CD8-positive, alpha-beta T cell (primary cell): ENCODE measurements at regions of chr2 and their contacts with region 1.

Region 1: DNA sequence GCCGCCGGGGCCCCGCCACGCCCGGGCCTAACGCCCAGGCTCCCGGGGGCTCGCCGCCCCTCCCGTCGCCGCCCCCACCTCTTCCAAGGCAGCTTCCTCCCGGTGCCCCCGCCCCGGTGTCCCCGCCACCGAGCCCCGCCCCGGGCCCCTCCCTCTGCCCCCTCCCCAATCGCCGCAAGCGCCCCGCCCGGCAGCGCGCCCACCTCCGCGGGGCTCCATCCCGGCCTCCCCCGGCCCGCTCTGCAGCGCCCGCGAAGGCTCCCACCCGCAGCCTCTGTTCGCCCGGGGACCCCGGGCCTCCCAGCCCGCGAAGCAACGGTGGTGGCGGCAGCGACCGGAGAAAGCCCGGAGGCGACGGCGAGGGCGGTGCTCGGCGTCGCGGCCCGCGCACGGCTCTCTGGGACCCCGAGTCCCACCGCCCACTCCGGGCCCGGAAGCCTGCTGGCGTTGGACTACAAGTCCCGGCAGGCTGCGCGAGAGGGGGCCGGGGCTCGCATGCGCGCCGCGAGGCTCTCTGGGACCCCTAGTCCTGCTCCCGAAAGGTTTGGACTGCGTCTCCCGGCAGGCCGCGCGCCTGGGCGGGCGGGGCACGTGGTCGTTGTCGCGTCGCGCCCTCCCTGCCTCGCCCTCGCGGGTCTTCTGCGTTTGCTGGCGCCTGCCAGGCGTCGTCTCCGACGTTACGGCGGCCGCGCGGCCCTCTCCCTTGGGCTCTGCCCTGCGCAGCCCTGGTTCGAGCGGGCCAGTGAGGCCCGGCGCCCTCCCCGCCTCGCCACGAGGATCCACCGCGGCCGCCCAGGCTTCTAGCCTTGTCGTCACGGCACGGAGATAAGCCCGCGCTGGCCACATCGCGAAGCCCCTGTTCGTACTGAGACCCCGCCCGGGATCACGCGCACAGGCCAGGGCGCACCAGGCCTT is at the start of gene STK25:
- DNase-seq: peak; percentile 94 to 98 (median 97)
- ATAC-seq: peak; percentile 93
- H3K4me3 ChIP-seq: peak within 1 kb of the TSS; percentile 71 to 72
- H3K4me3 Mint-ChIP-seq: peak within 1 kb of the TSS; percentile 81
- H3K27ac ChIP-seq: peak within 1 kb of the TSS; percentile 78 to 81
- H3K27ac Mint-ChIP-seq: peak within 1 kb of the TSS; percentile 85
- H3K4me1 ChIP-seq: peaks cover 21% of the 10 kb centered on the region
- H3K4me1 Mint-ChIP-seq: peaks cover 24% of the 10 kb centered on the region
- H3K27me3 ChIP-seq: no peaks in the 10 kb centered on the region
- H3K27me3 Mint-ChIP-seq: no peaks in the 10 kb centered on the region
- CTCF ChIP-seq: no peak
- total RNA-seq, gene STK25: 58.7 to 66.4 TPM

Region 2: GRCh38 chr2:240566203-240567136 is 942.0 kb before region 1 on chr2:
- CTCF ChIA-PET with region 1: no interaction called
- POLR2A ChIA-PET with region 1: no interaction called
- intact Hi-C with region 1: loop called in 1 of 2 experiments (anchors 5 kb)
- DNase-seq: peak; percentile 89 to 97 (median 96)
- ATAC-seq: peak; percentile 62
- H3K4me3 ChIP-seq: peak overlapping the region; percentile 61 to 71
- H3K4me3 Mint-ChIP-seq: peak overlapping the region; percentile 94
- H3K27ac ChIP-seq: peak overlapping the region; percentile 79 to 93
- H3K27ac Mint-ChIP-seq: peak overlapping the region; percentile 99
- H3K4me1 ChIP-seq: peaks cover 85% of the 10 kb centered on the region
- H3K4me1 Mint-ChIP-seq: peaks cover 76% of the 10 kb centered on the region
- H3K27me3 ChIP-seq: no peaks in the 10 kb centered on the region
- H3K27me3 Mint-ChIP-seq: no peaks in the 10 kb centered on the region
- CTCF ChIP-seq: peak; percentile 87

Region 3: GRCh38 chr2:241271641-241272297 is 236.7 kb before region 1 on chr2:
- CTCF ChIA-PET with region 1: no interaction called
- POLR2A ChIA-PET with region 1: no interaction called
- intact Hi-C with region 1: loop called in 1 of 2 experiments (anchors 5 kb)
- DNase-seq: peak; percentile 4 to 73 (median 64)
- ATAC-seq: peak; percentile 65
- H3K4me3 ChIP-seq: peak overlapping the region; percentile 44 to 66
- H3K4me3 Mint-ChIP-seq: peak overlapping the region; percentile 95
- H3K27ac ChIP-seq: peak overlapping the region; percentile 25 to 27
- H3K27ac Mint-ChIP-seq: peak overlapping the region; percentile 90
- H3K4me1 ChIP-seq: peaks cover 13% of the 10 kb centered on the region
- H3K4me1 Mint-ChIP-seq: peaks cover 52% of the 10 kb centered on the region
- H3K27me3 ChIP-seq: no peaks in the 10 kb centered on the region
- H3K27me3 Mint-ChIP-seq: no peaks in the 10 kb centered on the region
- CTCF ChIP-seq: no peak

Region 4: GRCh38 chr2:241540771-241541561 is 32.5 kb after region 1 on chr2:
- CTCF ChIA-PET with region 1: no interaction called
- POLR2A ChIA-PET with region 1: no interaction called
- intact Hi-C with region 1: loop called (anchors 1 to 2 kb)
- DNase-seq: peak; percentile 17 to 68 (median 57)
- ATAC-seq: peak; percentile 91
- H3K4me3 ChIP-seq: no peak overlapping the region
- H3K4me3 Mint-ChIP-seq: peak overlapping the region; percentile 70
- H3K27ac ChIP-seq: no peak overlapping the region
- H3K27ac Mint-ChIP-seq: no peak overlapping the region
- H3K4me1 ChIP-seq: peaks cover 5% of the 10 kb centered on the region
- H3K4me1 Mint-ChIP-seq: peaks cover 3% of the 10 kb centered on the region
- H3K27me3 ChIP-seq: peaks cover 10 to 15% of the 10 kb centered on the region in 2 experiments
- H3K27me3 Mint-ChIP-seq: peaks cover 23% of the 10 kb centered on the region
- CTCF ChIP-seq: no peak

Region 5: GRCh38 chr2:241637000-241637791 is 128.7 kb after region 1 on chr2 and contains the starts of genes ATG4B and THAP4:
- CTCF ChIA-PET with region 1: no interaction called
- POLR2A ChIA-PET with region 1: no interaction called
- intact Hi-C with region 1: loop called (anchors 1 to 5 kb)
- DNase-seq: peak; percentile 46 to 88 (median 76)
- ATAC-seq: peak; percentile 71
- H3K4me3 ChIP-seq: peak within 1 kb of the TSS; percentile 83 to 95
- H3K4me3 Mint-ChIP-seq: peak within 1 kb of the TSS; percentile 89
- H3K27ac ChIP-seq: peak within 1 kb of the TSS; percentile 80 to 96
- H3K27ac Mint-ChIP-seq: peak within 1 kb of the TSS; percentile 92
- H3K4me1 ChIP-seq: peaks cover 37% of the 10 kb centered on the region
- H3K4me1 Mint-ChIP-seq: peaks cover 55% of the 10 kb centered on the region
- H3K27me3 ChIP-seq: no peaks in the 10 kb centered on the region
- H3K27me3 Mint-ChIP-seq: no peaks in the 10 kb centered on the region
- CTCF ChIP-seq: no peak
- total RNA-seq, gene ATG4B: 94.0 to 94.5 TPM
- total RNA-seq, gene THAP4: 19.5 to 24.3 TPM

Region 6: DNA sequence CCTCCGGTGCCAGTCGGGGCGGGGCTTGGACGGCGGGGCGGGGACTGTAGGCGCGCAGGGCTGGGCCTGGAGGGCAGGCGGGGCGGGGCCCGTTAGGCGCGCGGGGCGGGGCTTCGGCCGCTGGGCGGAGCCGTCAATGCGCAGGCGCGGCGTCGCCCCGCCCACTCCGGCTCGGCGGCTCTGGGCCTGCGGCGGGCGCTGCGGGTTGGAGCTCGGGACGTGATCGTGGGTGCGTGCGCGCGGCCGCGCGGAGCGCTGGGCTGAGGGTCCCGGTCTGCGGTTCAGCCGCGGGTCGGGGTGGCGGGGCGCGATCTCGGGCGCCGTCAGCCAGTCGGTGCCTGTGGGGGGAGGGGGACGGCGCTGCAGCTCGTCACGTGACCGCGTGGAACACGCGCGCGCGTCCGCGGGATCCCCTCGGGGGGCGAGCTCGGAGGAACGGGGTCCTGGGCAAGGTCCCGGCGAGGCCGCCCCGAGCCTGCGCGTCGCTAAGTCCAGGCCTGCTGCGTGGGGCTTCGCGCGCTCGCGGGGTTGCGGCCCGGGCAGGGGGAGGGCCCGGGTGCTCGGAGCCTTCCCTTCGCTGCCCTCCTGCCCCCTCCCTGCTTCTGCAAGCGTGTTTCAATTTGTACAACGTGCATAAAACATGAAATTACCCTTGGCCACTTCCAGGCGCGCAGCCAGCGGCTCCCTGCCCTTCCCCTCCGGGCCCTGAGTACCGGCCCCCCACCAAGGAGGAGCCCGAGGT is 226.1 kb after region 1 on chr2 and contains the start of gene D2HGDH:
- CTCF ChIA-PET with region 1: no interaction called
- POLR2A ChIA-PET with region 1: no interaction called
- intact Hi-C with region 1: loop called in 1 of 2 experiments (anchors 2 kb)
- DNase-seq: peak; percentile 84 to 97 (median 94)
- ATAC-seq: peak; percentile 92
- H3K4me3 ChIP-seq: peak within 1 kb of the TSS; percentile 68 to 70
- H3K4me3 Mint-ChIP-seq: peak within 1 kb of the TSS; percentile 86
- H3K27ac ChIP-seq: peak within 1 kb of the TSS; percentile 26 to 65
- H3K27ac Mint-ChIP-seq: peak within 1 kb of the TSS; percentile 85
- H3K4me1 ChIP-seq: peaks cover 22% of the 10 kb centered on the region
- H3K4me1 Mint-ChIP-seq: peaks cover 25% of the 10 kb centered on the region
- H3K27me3 ChIP-seq: no peaks in the 10 kb centered on the region
- H3K27me3 Mint-ChIP-seq: no peaks in the 10 kb centered on the region
- CTCF ChIP-seq: no peak
- total RNA-seq, gene D2HGDH: 41.6 to 46.4 TPM